ENCODE measurements at regions of chr3 and their contacts with region 1.

Region 1: DNA sequence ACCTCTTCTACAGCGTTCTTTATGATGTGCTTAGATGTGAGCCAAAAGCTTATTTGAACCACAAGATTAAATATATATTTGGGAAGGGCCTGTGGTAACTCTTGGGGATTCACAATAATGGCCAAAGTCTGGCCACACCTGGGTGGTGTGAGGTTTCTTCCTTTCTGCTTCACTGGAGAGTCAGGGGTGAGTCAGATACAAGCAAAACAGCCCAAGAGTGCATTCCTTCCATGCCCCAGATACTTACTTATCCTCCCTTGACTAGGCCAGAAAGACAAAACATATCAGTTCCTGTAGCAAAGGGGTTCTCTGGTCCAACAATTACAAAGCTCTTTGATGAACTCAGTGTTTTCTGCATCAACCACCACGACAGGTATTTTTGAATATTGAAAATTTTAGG is 941 bp downstream of the ZBED2 start:
- DNase-seq: no peak
- ATAC-seq: no peak
- H3K4me3 Mint-ChIP-seq: peak overlapping the region; percentile 93
- H3K27ac Mint-ChIP-seq: peak overlapping the region; percentile 98
- H3K4me1 Mint-ChIP-seq: peaks cover 59% of the 10 kb centered on the region
- H3K27me3 Mint-ChIP-seq: no peaks in the 10 kb centered on the region

Region 2: GRCh38 chr3:111577794-111578685 is 16.2 kb before region 1 on chr3:
- CTCF ChIA-PET with region 1: interaction called, 8 read pairs
- POLR2A ChIA-PET with region 1: interaction called, 3 read pairs
- intact Hi-C with region 1: loop called in 1 of 2 experiments (anchors 2 kb)
- DNase-seq: no peak
- ATAC-seq: peak; percentile 84
- H3K4me3 Mint-ChIP-seq: no peak overlapping the region
- H3K27ac Mint-ChIP-seq: peak overlapping the region; percentile 72
- H3K4me1 Mint-ChIP-seq: peaks cover 75% of the 10 kb centered on the region
- H3K27me3 Mint-ChIP-seq: no peaks in the 10 kb centered on the region

Region 3: DNA sequence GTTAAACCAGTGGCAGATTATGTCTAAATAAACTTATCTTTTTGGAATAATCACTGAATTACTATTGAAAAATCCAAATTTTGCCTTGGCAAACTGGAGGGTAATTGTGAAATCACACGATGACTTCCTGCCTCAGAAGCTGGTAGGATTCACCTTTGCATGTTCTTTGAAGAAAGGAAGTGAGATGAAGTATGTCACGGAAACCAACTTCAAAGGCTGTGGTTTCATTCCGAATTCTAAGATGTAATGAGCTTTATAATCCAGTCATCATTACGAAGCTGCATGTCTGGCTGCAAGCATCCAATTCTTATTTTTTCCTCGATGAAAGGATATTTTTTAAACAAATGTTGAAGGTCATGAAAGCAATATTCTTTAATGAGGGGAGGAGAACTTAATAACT is 16.0 kb after region 1 on chr3:
- CTCF ChIA-PET with region 1: interaction called, 13 read pairs
- POLR2A ChIA-PET with region 1: interaction called, 26 read pairs
- intact Hi-C with region 1: loop called (anchors 1 to 2 kb)
- DNase-seq: peak; percentile 53
- ATAC-seq: peak; percentile 56
- H3K4me3 Mint-ChIP-seq: peak overlapping the region; percentile 62
- H3K27ac Mint-ChIP-seq: peak overlapping the region; percentile 98
- H3K4me1 Mint-ChIP-seq: peaks cover 98% of the 10 kb centered on the region
- H3K27me3 Mint-ChIP-seq: no peaks in the 10 kb centered on the region

Region 4: GRCh38 chr3:112498914-112499711 is 904.9 kb after region 1 on chr3 and contains the start of gene BTLA:
- CTCF ChIA-PET with region 1: no interaction called
- POLR2A ChIA-PET with region 1: no interaction called
- intact Hi-C with region 1: loop called in 1 of 2 experiments (anchors 10 kb)
- DNase-seq: peak; percentile 58
- ATAC-seq: peak; percentile 70
- H3K4me3 Mint-ChIP-seq: peak within 1 kb of the TSS; percentile 97
- H3K27ac Mint-ChIP-seq: peak within 1 kb of the TSS; percentile 100
- H3K4me1 Mint-ChIP-seq: peaks cover 54% of the 10 kb centered on the region
- H3K27me3 Mint-ChIP-seq: no peaks in the 10 kb centered on the region
- total RNA-seq, gene BTLA: 21.0 to 21.7 TPM

Measured in activated CD4-positive, alpha-beta T cell treated with anti-CD3 and anti-CD28 coated beads for 36 hours (primary cell).